Activated T-helper 1 cell treated with anti-CD3 and anti-CD28 coated beads, Interleukin-12 subunit alpha, Interleukin-12 subunit beta, Interleukin-2, Interleukin-4 antibody, amounts not matched to agents 30 ng/mL and 10 ng/mL and 1 ng/mL, durations not matched to agents 14 hours and 24 hours and 36 hours (primary cell): ENCODE measurements at regions of chr19 and their contacts with region 1.

Region 1: DNA sequence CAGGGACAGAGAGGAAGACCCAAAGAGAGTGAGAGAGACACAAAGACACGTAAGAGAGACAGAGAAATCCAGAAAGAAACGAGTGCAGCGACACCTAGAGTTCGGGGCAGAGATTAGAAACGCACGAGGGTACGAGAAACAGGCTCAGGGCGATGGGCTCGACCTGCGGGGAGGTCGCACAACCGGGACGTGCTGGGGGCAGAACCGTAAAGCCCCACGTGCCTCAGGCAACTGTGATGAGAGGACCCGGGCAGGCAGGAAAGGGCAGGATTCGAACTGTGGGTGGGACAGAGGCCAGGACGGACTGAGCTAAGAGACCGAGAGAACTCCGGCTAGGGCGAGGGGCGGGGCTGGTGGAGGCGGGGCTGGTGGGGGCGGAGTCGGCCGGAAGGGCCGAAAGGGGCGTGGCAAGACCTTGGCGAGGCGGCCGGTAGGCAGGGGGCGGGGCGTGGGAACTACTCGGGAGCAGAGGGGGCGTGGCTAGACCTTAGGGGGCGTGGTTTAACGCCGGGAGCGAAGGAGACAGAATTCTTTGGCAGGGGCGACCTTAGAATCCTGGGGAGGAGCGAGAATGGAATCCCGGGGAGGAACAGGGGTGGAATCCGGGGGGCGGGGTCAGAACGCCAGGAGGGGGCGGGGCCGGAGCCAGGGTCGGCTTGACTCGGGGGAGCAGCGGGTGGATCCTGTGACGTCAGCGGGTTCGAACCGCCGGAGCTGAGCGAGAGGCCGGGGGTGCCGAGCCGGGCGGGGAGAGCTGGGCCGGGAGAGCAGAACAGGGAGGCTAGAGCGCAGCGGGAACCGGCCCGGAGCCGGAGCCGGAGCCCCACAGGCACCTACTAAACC is at the start of gene NECTIN2:
- DNase-seq: peak; percentile 73
- H3K4me3 Mint-ChIP-seq: peak within 1 kb of the TSS; percentile 83
- H3K27ac Mint-ChIP-seq: peak within 1 kb of the TSS; percentile 55
- H3K4me1 Mint-ChIP-seq: peaks cover 21% of the 10 kb centered on the region
- H3K27me3 Mint-ChIP-seq: peaks cover 34% of the 10 kb centered on the region
- total RNA-seq, gene NECTIN2: 0.08 and 0.39 TPM in 2 replicates

Region 2: GRCh38 chr19:44190020-44190419 is 655.8 kb before region 1 on chr19:
- intact Hi-C with region 1: no loop called
- DNase-seq: no peak
- H3K4me3 Mint-ChIP-seq: no peak overlapping the region
- H3K27ac Mint-ChIP-seq: no peak overlapping the region
- H3K4me1 Mint-ChIP-seq: no peaks in the 10 kb centered on the region
- H3K27me3 Mint-ChIP-seq: no peaks in the 10 kb centered on the region

Region 3: GRCh38 chr19:44689056-44689895 is 156.6 kb before region 1 on chr19:
- intact Hi-C with region 1: loop called (anchors 1 kb)
- DNase-seq: peak; percentile 65
- H3K4me3 Mint-ChIP-seq: no peak overlapping the region
- H3K27ac Mint-ChIP-seq: peak overlapping the region; percentile 6
- H3K4me1 Mint-ChIP-seq: peaks cover 56% of the 10 kb centered on the region
- H3K27me3 Mint-ChIP-seq: peaks cover 11% of the 10 kb centered on the region

Region 4: DNA sequence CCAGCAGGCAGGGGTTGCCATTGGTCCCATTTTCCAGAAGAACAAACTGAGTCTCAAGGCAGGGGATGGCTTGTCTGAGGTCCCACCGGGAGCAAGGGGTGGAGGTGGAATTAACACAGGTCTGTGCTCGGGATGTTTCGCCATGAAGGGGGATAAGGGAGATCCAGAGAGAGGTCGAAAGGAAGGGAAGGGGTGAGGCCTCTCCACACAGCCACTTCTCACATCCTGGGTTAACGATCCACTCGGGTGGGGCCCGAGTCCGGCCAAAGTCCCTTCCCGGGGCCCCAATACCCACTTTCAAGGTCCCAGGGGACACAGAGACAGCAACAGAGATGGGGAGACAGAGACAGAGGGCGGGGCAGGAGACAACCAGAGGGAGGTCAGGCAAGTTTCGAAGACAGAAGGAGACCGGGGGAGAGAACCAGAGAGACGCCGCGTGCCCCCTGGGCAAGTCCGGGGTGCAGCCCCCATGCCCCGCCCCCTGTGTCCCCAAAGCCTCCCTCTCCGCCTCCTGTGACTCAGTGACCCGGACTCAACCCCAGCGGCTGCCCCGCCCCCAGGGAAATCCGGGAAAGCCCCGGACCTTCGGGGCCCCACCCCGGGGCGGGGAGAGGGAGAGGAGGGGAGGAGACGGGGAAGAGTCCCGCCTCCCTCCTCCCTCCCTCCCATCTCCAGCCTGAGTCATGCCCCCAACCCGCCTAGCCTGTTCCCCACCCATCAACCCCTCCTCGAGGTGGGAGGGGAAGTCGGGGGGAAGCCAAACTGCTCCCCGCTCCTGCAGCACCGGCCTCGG is 98.7 kb before region 1 on chr19:
- intact Hi-C with region 1: loop called (anchors 1 kb)
- DNase-seq: peak; percentile 87
- H3K4me3 Mint-ChIP-seq: peak overlapping the region; percentile 93
- H3K27ac Mint-ChIP-seq: peak overlapping the region; percentile 97
- H3K4me1 Mint-ChIP-seq: peaks cover 48% of the 10 kb centered on the region
- H3K27me3 Mint-ChIP-seq: no peaks in the 10 kb centered on the region

Region 5: GRCh38 chr19:44782729-44783128 is 63.1 kb before region 1 on chr19:
- intact Hi-C with region 1: loop called (anchors 1 kb)
- DNase-seq: no peak
- H3K4me3 Mint-ChIP-seq: no peak overlapping the region
- H3K27ac Mint-ChIP-seq: no peak overlapping the region
- H3K4me1 Mint-ChIP-seq: no peaks in the 10 kb centered on the region
- H3K27me3 Mint-ChIP-seq: peaks cover 2% of the 10 kb centered on the region

Region 6: GRCh38 chr19:44890366-44891015 is 44.7 kb after region 1 on chr19:
- intact Hi-C with region 1: loop called (anchors 1 kb)
- DNase-seq: peak; percentile 100
- H3K4me3 Mint-ChIP-seq: peak overlapping the region; percentile 86
- H3K27ac Mint-ChIP-seq: peak overlapping the region; percentile 96
- H3K4me1 Mint-ChIP-seq: peaks cover 30% of the 10 kb centered on the region
- H3K27me3 Mint-ChIP-seq: no peaks in the 10 kb centered on the region

Region 7: DNA sequence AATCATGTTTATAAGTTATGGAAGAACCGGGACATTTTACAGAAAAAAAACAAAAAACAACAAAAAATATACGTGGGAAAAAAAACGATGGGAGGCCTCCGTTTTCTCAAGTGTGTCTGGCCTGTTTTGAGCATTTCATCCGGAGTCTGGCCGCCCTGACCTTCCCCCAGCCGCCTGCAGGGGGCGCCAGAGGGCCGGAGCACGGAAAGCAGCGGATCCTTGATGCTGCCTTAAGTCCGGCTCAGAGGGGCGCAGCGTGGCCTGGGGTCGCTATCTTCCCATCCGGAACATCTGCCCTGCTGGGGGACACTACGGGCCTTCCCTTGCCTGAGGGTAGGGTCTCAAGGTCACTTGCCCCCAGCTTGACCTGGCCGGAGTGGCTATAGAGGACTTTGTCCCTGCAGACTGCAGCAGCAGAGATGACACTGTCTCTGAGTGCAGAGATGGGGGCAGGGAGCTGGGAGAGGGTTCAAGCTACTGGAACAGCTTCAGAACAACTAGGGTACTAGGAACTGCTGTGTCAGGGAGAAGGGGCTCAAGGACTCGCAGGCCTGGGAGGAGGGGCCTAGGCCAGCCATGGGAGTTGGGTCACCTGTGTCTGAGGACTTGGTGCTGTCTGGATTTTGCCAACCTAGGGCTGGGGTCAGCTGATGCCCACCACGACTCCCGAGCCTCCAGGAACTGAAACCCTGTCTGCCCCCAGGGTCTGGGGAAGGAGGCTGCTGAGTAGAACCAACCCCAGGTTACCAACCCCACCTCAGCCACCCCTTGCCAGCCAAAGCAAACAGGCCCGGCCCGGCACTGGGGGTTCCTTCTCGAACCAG is 58.0 kb after region 1 on chr19:
- intact Hi-C with region 1: no loop called
- DNase-seq: peak; percentile 54
- H3K4me3 Mint-ChIP-seq: no peak overlapping the region
- H3K27ac Mint-ChIP-seq: no peak overlapping the region
- H3K4me1 Mint-ChIP-seq: peaks cover 8% of the 10 kb centered on the region
- H3K27me3 Mint-ChIP-seq: peaks cover 16% of the 10 kb centered on the region